Dendritic cell treated with granulocyte-macrophage colony-stimulating factor and Interleukin-4, amounts not matched to agents 40 ng/mL and 50 ng/mL, for 4 days (primary cell): ENCODE measurements at regions of chr18 and their contacts with region 1.

Region 1: GRCh38 chr18:24726727-24727492 is 266.5 kb downstream of the HRH4 start:
- H3K4me3 Mint-ChIP-seq: no peak overlapping the region
- H3K27ac Mint-ChIP-seq: no peak overlapping the region
- H3K4me1 Mint-ChIP-seq: no peaks in the 10 kb centered on the region
- H3K27me3 Mint-ChIP-seq: no peaks in the 10 kb centered on the region

Region 2: GRCh38 chr18:24354286-24354685 is 372.6 kb before region 1 on chr18:
- intact Hi-C with region 1: loop called (anchors 10 kb)
- H3K4me3 Mint-ChIP-seq: no peak overlapping the region
- H3K27ac Mint-ChIP-seq: no peak overlapping the region
- H3K4me1 Mint-ChIP-seq: no peaks in the 10 kb centered on the region
- H3K27me3 Mint-ChIP-seq: no peaks in the 10 kb centered on the region

Region 3: GRCh38 chr18:24616653-24617052 is 110.3 kb before region 1 on chr18:
- intact Hi-C with region 1: no loop called
- H3K4me3 Mint-ChIP-seq: no peak overlapping the region
- H3K27ac Mint-ChIP-seq: no peak overlapping the region
- H3K4me1 Mint-ChIP-seq: peaks cover 6% of the 10 kb centered on the region
- H3K27me3 Mint-ChIP-seq: no peaks in the 10 kb centered on the region

Region 4: GRCh38 chr18:25686960-25687520 is 960.1 kb after region 1 on chr18:
- intact Hi-C with region 1: no loop called
- H3K4me3 Mint-ChIP-seq: no peak overlapping the region
- H3K27ac Mint-ChIP-seq: no peak overlapping the region
- H3K4me1 Mint-ChIP-seq: no peaks in the 10 kb centered on the region
- H3K27me3 Mint-ChIP-seq: no peaks in the 10 kb centered on the region